HCT116 (cell line): ENCODE measurements at regions of chr20 and their contacts with region 1.

Region 1: DNA sequence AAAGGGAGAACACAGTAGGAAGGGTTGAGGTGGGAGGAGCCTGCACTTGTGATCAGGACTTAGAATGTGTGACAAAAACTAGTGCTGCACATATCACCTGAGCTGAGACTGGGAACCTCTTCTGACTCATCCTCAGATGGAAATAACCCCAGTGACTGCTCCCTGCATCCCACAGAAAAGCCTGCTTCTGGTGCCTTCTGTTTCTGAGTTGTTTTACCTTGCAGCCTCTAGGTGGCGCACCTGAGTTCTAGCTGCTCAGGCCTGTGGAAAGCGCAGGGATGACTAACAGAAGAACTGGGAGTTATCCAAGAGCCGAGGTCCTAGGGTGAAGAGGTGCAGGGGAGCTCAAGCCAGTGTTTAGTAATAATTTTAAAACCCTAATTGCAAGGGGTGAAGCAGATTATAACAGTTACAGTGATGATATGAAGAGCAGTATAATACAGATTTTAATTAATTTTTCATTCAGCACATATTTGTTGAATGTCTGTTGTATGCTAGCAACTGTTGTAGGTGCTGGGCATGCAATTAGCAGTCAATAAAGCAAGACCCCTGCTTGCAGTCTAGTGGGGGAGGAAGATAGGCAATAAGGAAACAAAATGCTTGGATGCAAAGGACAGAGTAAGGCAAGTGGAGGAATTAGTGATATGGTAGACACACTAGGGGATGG is 302.5 kb downstream of the DHX35 start:
- DNase-seq: peak; percentile 60
- ATAC-seq: peak; percentile 90
- H3K4me3 ChIP-seq: no peak overlapping the region
- H3K27ac ChIP-seq: no peak overlapping the region
- H3K4me1 ChIP-seq: no peaks in the 10 kb centered on the region
- H3K27me3 ChIP-seq: no peaks in the 10 kb centered on the region
- CTCF ChIP-seq: peak; percentile 62 to 93 (median 91); a peak in 5 of 6 replicates
- POLR2A ChIP-seq: no peak
- RAD21 ChIP-seq: peak; percentile 50

Region 2: GRCh38 chr20:39112178-39112743 is 152.4 kb before region 1 on chr20:
- CTCF ChIA-PET with region 1: interaction called, 20 read pairs
- POLR2A ChIA-PET with region 1: no interaction called
- RAD21 ChIA-PET with region 1: interaction called in 1 of 2 experiments, 6 read pairs
- intact Hi-C with region 1: loop called (anchors 1 kb)
- DNase-seq: peak; percentile 50
- ATAC-seq: peak; percentile 76
- H3K4me3 ChIP-seq: no peak overlapping the region
- H3K27ac ChIP-seq: no peak overlapping the region
- H3K4me1 ChIP-seq: peaks cover 30 to 53% of the 10 kb centered on the region in 2 experiments
- H3K27me3 ChIP-seq: peaks cover 6% of the 10 kb centered on the region; the same call in 1 of the 2 replicates
- CTCF ChIP-seq: peak; percentile 57 to 81 (median 70)
- POLR2A ChIP-seq: no peak
- RAD21 ChIP-seq: peak; percentile 90

Region 3: GRCh38 chr20:39225536-39225935 is 39.1 kb before region 1 on chr20:
- CTCF ChIA-PET with region 1: no interaction called
- POLR2A ChIA-PET with region 1: no interaction called
- RAD21 ChIA-PET with region 1: no interaction called
- intact Hi-C with region 1: no loop called
- DNase-seq: no peak
- ATAC-seq: 0 out of 2 replicates have a peak, but pooled peaks have one; percentile 27
- H3K4me3 ChIP-seq: no peak overlapping the region
- H3K27ac ChIP-seq: no peak overlapping the region
- H3K4me1 ChIP-seq: no peaks in the 10 kb centered on the region
- H3K27me3 ChIP-seq: peaks cover 63% of the 10 kb centered on the region
- CTCF ChIP-seq: 0 out of 6 replicates have a peak, but pooled peaks of 1 of the 3 experiments have one; percentile 6
- POLR2A ChIP-seq: no peak
- RAD21 ChIP-seq: no peak